Naive thymus-derived CD4-positive, alpha-beta T cell (primary cell): ENCODE measurements at regions of chr7 and their contacts with region 1.

Region 1: GRCh38 chr7:155509725-155510551 is 36.4 kb downstream of the CNPY1 start:
- DNase-seq: no peak
- ATAC-seq: no peak
- H3K4me3 ChIP-seq: no peak overlapping the region
- H3K4me3 Mint-ChIP-seq: peak overlapping the region; percentile 20 to 72 (median 52)
- H3K27ac ChIP-seq: no peak overlapping the region
- H3K27ac Mint-ChIP-seq: peak overlapping the region in 1 of 9 donors; percentile 70
- H3K4me1 ChIP-seq: peaks cover 0 to 7% of the 10 kb centered on the region in 2 donors
- H3K4me1 Mint-ChIP-seq: peaks cover 11 to 30% (median 18%) of the 10 kb centered on the region in 7 donors
- H3K27me3 ChIP-seq: peaks cover 15 to 28% of the 10 kb centered on the region in 2 donors
- H3K27me3 Mint-ChIP-seq: peaks cover 87 to 90% (median 89%) of the 10 kb centered on the region in 5 donors

Region 2: GRCh38 chr7:155456738-155457564 is 53.0 kb before region 1 on chr7:
- CTCF ChIA-PET with region 1: no interaction called
- POLR2A ChIA-PET with region 1: no interaction called
- intact Hi-C with region 1: loop called in 1 of 2 experiments (anchors 1 kb)
- DNase-seq: no peak
- ATAC-seq: no peak
- H3K4me3 ChIP-seq: peak overlapping the region; percentile 24
- H3K4me3 Mint-ChIP-seq: peak overlapping the region; percentile 50 to 87 (median 74)
- H3K27ac ChIP-seq: no peak overlapping the region
- H3K27ac Mint-ChIP-seq: peak overlapping the region in 1 of 9 donors; percentile 83
- H3K4me1 ChIP-seq: no peaks in the 10 kb centered on the region
- H3K4me1 Mint-ChIP-seq: peaks cover 7 to 34% (median 20%) of the 10 kb centered on the region in 7 donors
- H3K27me3 ChIP-seq: peaks cover 0 to 9% of the 10 kb centered on the region in 2 donors
- H3K27me3 Mint-ChIP-seq: peaks cover 50 to 80% (median 68%) of the 10 kb centered on the region in 5 donors

Region 3: GRCh38 chr7:155466814-155467733 is 42.9 kb before region 1 on chr7:
- CTCF ChIA-PET with region 1: no interaction called
- POLR2A ChIA-PET with region 1: no interaction called
- intact Hi-C with region 1: loop called in 1 of 2 experiments (anchors 2 kb)
- DNase-seq: no peak
- ATAC-seq: peak; percentile 38
- H3K4me3 ChIP-seq: no peak overlapping the region
- H3K4me3 Mint-ChIP-seq: peak overlapping the region in 8 of 10 donors; percentile 2 to 62 (median 23)
- H3K27ac ChIP-seq: no peak overlapping the region
- H3K27ac Mint-ChIP-seq: peak overlapping the region in 1 of 9 donors; percentile 76
- H3K4me1 ChIP-seq: no peaks in the 10 kb centered on the region
- H3K4me1 Mint-ChIP-seq: peaks cover 6 to 24% (median 10%) of the 10 kb centered on the region in 7 donors
- H3K27me3 ChIP-seq: peaks cover 12 to 28% of the 10 kb centered on the region in 2 donors
- H3K27me3 Mint-ChIP-seq: peaks cover 73 to 92% (median 82%) of the 10 kb centered on the region in 5 donors

Region 4: GRCh38 chr7:155533827-155534690 is 24.1 kb after region 1 on chr7:
- CTCF ChIA-PET with region 1: no interaction called
- POLR2A ChIA-PET with region 1: no interaction called
- intact Hi-C with region 1: loop called in 1 of 2 experiments (anchors 2 kb)
- DNase-seq: peak in 1 of 9 donors; percentile 37
- ATAC-seq: no peak
- H3K4me3 ChIP-seq: peak overlapping the region; percentile 37
- H3K4me3 Mint-ChIP-seq: peak overlapping the region; percentile 30 to 79 (median 62)
- H3K27ac ChIP-seq: no peak overlapping the region
- H3K27ac Mint-ChIP-seq: peak overlapping the region in 1 of 9 donors; percentile 38
- H3K4me1 ChIP-seq: peaks cover 4 to 5% of the 10 kb centered on the region in 2 donors
- H3K4me1 Mint-ChIP-seq: peaks cover 8 to 21% (median 16%) of the 10 kb centered on the region in 7 donors
- H3K27me3 ChIP-seq: peaks cover 5 to 10% of the 10 kb centered on the region in 2 donors
- H3K27me3 Mint-ChIP-seq: peaks cover 72 to 84% (median 73%) of the 10 kb centered on the region in 5 donors

Region 5: GRCh38 chr7:155804897-155805825 is 295.2 kb after region 1 on chr7:
- CTCF ChIA-PET with region 1: no interaction called
- POLR2A ChIA-PET with region 1: no interaction called
- intact Hi-C with region 1: loop called in 1 of 2 experiments (anchors 2 kb)
- DNase-seq: peak in 8 of 9 donors; percentile 22 to 78 (median 32)
- ATAC-seq: peak; percentile 63
- H3K4me3 ChIP-seq: peak overlapping the region; percentile 47
- H3K4me3 Mint-ChIP-seq: peak overlapping the region; percentile 66 to 85 (median 76)
- H3K27ac ChIP-seq: no peak overlapping the region
- H3K27ac Mint-ChIP-seq: no peak overlapping the region
- H3K4me1 ChIP-seq: no peaks in the 10 kb centered on the region
- H3K4me1 Mint-ChIP-seq: peaks cover 3 to 35% (median 17%) of the 10 kb centered on the region in 7 donors
- H3K27me3 ChIP-seq: peaks cover 0 to 4% of the 10 kb centered on the region in 2 donors
- H3K27me3 Mint-ChIP-seq: peaks cover 39 to 65% (median 49%) of the 10 kb centered on the region in 5 donors

Region 6: DNA sequence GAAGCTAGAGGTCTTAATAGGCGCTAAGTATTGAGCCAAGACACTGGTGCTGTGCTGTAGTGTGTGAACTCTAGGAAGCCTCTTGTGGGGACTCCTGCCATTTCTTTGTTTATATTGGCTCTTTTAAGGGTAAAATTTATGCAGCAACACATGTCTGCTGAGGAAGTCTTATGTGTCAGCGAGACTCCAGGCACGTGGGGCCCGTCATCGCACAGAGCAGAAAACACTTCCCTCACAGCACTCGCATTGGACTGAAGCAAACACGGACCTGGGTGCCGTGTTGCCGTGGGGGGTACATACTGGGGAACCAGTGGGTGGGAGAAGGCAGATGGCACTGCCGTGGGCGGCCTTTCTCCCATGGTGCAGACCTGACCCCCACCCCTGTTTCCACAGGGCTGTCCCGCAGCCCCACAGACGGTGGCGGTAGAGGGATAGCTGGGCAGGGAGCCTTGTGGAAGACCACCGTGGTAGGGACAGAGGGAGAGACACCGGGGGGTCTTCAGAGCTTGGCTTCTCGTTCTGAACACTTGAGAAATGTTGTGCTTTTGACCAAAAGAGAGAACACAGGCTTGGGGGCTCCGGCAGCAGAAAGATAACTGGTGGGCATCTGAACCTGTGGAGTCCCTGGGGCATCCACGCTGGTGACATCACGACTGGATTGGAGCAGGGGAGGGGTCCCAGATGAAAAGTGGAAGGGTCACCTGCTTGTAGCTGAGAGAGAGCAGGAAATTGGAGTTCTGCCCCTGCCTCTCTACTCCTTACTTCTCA is 587.0 kb after region 1 on chr7:
- CTCF ChIA-PET with region 1: no interaction called
- POLR2A ChIA-PET with region 1: no interaction called
- intact Hi-C with region 1: no loop called
- DNase-seq: peak in 5 of 9 donors; percentile 11 to 37 (median 22)
- ATAC-seq: peak; percentile 31
- H3K4me3 ChIP-seq: no peak overlapping the region
- H3K4me3 Mint-ChIP-seq: peak overlapping the region in 9 of 10 donors; percentile 5 to 79 (median 66)
- H3K27ac ChIP-seq: no peak overlapping the region
- H3K27ac Mint-ChIP-seq: peak overlapping the region in 8 of 9 donors; percentile 63 to 89 (median 80)
- H3K4me1 ChIP-seq: peaks cover 0 to 26% of the 10 kb centered on the region in 2 donors
- H3K4me1 Mint-ChIP-seq: peaks cover 0 to 34% (median 22%) of the 10 kb centered on the region in 7 donors
- H3K27me3 ChIP-seq: no peaks in the 10 kb centered on the region
- H3K27me3 Mint-ChIP-seq: peaks cover 0 to 4% (median 0%) of the 10 kb centered on the region in 5 donors

Region 7: GRCh38 chr7:157004050-157004838 is 1494.3 kb after region 1 on chr7:
- CTCF ChIA-PET with region 1: no interaction called
- POLR2A ChIA-PET with region 1: no interaction called
- intact Hi-C with region 1: loop called in 1 of 2 experiments (anchors 2 kb)
- DNase-seq: peak in 1 of 9 donors; percentile 20
- ATAC-seq: no peak
- H3K4me3 ChIP-seq: no peak overlapping the region
- H3K4me3 Mint-ChIP-seq: peak overlapping the region in 8 of 10 donors; percentile 8 to 56 (median 25)
- H3K27ac ChIP-seq: no peak overlapping the region
- H3K27ac Mint-ChIP-seq: peak overlapping the region in 1 of 9 donors; percentile 63
- H3K4me1 ChIP-seq: peaks cover 0 to 14% of the 10 kb centered on the region in 2 donors
- H3K4me1 Mint-ChIP-seq: peaks cover 13 to 32% (median 27%) of the 10 kb centered on the region in 7 donors
- H3K27me3 ChIP-seq: peaks cover 11 to 19% of the 10 kb centered on the region in 2 donors
- H3K27me3 Mint-ChIP-seq: peaks cover 52 to 79% (median 61%) of the 10 kb centered on the region in 5 donors